RWPE1 (cell line): ENCODE measurements at regions of chr4 and their contacts with region 1.

Region 1: GRCh38 chr4:6327041-6327917 is 57.6 kb downstream of the WFS1 start:
- DNase-seq: peak; percentile 55
- H3K27ac ChIP-seq: no peak overlapping the region
- CTCF ChIP-seq: peak; percentile 89

Region 2: DNA sequence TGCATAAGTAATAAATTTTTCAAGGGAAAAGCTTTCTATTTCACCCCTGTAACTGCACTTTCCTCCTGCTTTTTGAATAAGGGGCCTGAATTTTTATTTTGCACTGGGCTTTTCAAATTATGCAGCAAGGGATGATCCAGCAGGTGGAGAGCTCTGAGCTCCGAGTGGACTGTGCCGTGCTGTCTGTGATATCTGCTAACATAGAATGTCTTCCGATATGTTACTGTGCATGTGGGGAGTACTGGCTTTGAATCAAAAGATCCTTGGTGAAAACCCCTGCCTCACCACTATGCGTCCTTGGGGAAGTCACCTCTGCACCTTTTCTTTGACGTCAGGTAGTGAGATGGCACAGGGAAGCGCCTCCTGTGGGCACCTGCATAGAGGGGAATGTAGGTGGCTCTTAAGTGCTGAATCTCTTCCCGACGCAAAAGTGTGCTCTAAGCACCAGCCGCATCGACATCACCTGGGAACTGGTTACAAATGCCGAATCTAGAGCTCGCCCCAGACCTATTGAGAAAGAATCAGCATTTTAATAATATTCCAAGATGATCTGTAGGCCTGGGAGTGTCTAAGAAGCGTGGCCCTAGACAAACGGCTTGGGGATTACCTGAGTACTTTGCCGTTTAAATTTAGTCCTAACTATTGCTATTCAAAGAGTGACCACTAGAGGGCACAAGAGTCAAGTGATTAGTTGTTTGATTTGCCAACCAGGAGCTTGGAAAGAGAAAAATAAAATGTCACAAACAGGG is 76.9 kb before region 1 on chr4:
- CTCF ChIA-PET with region 1: interaction called, 87 read pairs
- POLR2A ChIA-PET with region 1: no interaction called
- DNase-seq: peak; percentile 55
- H3K27ac ChIP-seq: no peak overlapping the region
- CTCF ChIP-seq: peak; percentile 77

Region 3: DNA sequence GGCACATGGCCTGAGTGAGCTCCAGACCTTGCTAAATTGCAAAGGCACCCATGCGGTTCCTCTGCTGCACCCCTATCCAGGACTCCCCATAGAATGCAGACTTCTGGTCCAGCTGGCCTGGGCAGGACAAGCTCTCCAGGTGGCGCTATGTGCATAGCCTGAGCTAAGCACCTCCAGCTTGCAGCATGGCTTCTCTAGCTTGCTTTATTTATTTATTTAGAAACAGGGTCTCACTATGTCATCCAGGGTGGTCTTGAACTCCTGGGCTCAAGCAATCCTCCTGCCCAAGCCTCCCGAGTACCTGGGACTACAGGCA is 63.1 kb before region 1 on chr4:
- CTCF ChIA-PET with region 1: interaction called, 12 read pairs
- POLR2A ChIA-PET with region 1: no interaction called
- DNase-seq: no peak
- H3K27ac ChIP-seq: no peak overlapping the region
- CTCF ChIP-seq: no peak